CD8-positive, alpha-beta memory T cell (primary cell): ENCODE measurements at regions of chr15 and their contacts with region 1.

Region 1: GRCh38 chr15:51776952-51777574 is 25.7 kb downstream of the TMOD2 start:
- DNase-seq: peak; percentile 37 to 72 (median 47)
- H3K4me3 ChIP-seq: no peak overlapping the region
- H3K4me3 Mint-ChIP-seq: no peak overlapping the region
- H3K27ac ChIP-seq: no peak overlapping the region
- H3K27ac Mint-ChIP-seq: no peak overlapping the region
- H3K4me1 ChIP-seq: no peaks in the 10 kb centered on the region
- H3K4me1 Mint-ChIP-seq: peaks cover 5 to 11% (median 6%) of the 10 kb centered on the region in 3 donors
- H3K27me3 ChIP-seq: no peaks in the 10 kb centered on the region
- H3K27me3 Mint-ChIP-seq: no peaks in the 10 kb centered on the region

Region 2: GRCh38 chr15:51377071-51377786 is 399.8 kb before region 1 on chr15:
- CTCF ChIA-PET with region 1: no interaction called
- POLR2A ChIA-PET with region 1: no interaction called
- DNase-seq: no peak
- H3K4me3 ChIP-seq: no peak overlapping the region
- H3K4me3 Mint-ChIP-seq: no peak overlapping the region
- H3K27ac ChIP-seq: no peak overlapping the region
- H3K27ac Mint-ChIP-seq: no peak overlapping the region
- H3K4me1 ChIP-seq: no peaks in the 10 kb centered on the region
- H3K4me1 Mint-ChIP-seq: no peaks in the 10 kb centered on the region
- H3K27me3 ChIP-seq: no peaks in the 10 kb centered on the region
- H3K27me3 Mint-ChIP-seq: peaks cover 5 to 10% of the 10 kb centered on the region in 2 donors

Region 3: GRCh38 chr15:51622604-51623370 is 154.3 kb before region 1 on chr15 and contains the start of gene DMXL2:
- CTCF ChIA-PET with region 1: interaction called, 10 read pairs
- POLR2A ChIA-PET with region 1: no interaction called
- DNase-seq: peak; percentile 37 to 80 (median 52)
- H3K4me3 ChIP-seq: peak within 1 kb of the TSS; percentile 61
- H3K4me3 Mint-ChIP-seq: peak within 1 kb of the TSS; percentile 66 to 94 (median 80)
- H3K27ac ChIP-seq: peak within 1 kb of the TSS; percentile 41
- H3K27ac Mint-ChIP-seq: peak within 1 kb of the TSS in 4 of 8 donors; percentile 21 to 78 (median 42)
- H3K4me1 ChIP-seq: peaks cover 7% of the 10 kb centered on the region
- H3K4me1 Mint-ChIP-seq: peaks cover 10 to 25% (median 15%) of the 10 kb centered on the region in 3 donors
- H3K27me3 ChIP-seq: no peaks in the 10 kb centered on the region
- H3K27me3 Mint-ChIP-seq: peaks cover 17 to 31% of the 10 kb centered on the region in 2 donors
- total RNA-seq, gene DMXL2: 5.8 to 7.0 TPM

Region 4: GRCh38 chr15:51658670-51659069 is 118.4 kb before region 1 on chr15:
- CTCF ChIA-PET with region 1: interaction called, 32 read pairs
- POLR2A ChIA-PET with region 1: no interaction called
- DNase-seq: no peak
- H3K4me3 ChIP-seq: no peak overlapping the region
- H3K4me3 Mint-ChIP-seq: no peak overlapping the region
- H3K27ac ChIP-seq: no peak overlapping the region
- H3K27ac Mint-ChIP-seq: no peak overlapping the region
- H3K4me1 ChIP-seq: no peaks in the 10 kb centered on the region
- H3K4me1 Mint-ChIP-seq: no peaks in the 10 kb centered on the region
- H3K27me3 ChIP-seq: no peaks in the 10 kb centered on the region
- H3K27me3 Mint-ChIP-seq: peaks cover 3% of the 10 kb centered on the region in 2 donors

Region 5: DNA sequence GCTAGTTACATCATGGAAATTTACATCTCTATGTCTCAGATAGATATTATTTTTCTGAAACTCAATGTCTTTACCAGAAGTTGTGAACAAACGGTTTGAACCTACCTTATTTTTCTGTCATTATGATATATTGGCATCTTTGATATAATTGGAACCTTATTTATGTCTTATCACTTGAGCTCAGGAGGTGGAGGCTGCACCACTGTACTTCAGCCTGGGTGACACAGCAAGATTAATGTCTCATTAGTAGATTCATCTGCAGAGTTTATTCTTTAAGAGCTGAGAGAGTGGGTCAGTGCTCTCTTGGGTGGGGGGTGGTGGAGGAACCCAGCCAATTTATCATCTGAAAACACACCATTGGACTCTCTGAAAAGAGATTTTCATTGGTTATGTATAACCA is 74.4 kb before region 1 on chr15:
- CTCF ChIA-PET with region 1: interaction called, 11 read pairs
- POLR2A ChIA-PET with region 1: no interaction called
- DNase-seq: no peak
- H3K4me3 ChIP-seq: no peak overlapping the region
- H3K4me3 Mint-ChIP-seq: no peak overlapping the region
- H3K27ac ChIP-seq: no peak overlapping the region
- H3K27ac Mint-ChIP-seq: no peak overlapping the region
- H3K4me1 ChIP-seq: no peaks in the 10 kb centered on the region
- H3K4me1 Mint-ChIP-seq: no peaks in the 10 kb centered on the region
- H3K27me3 ChIP-seq: peaks cover 10% of the 10 kb centered on the region
- H3K27me3 Mint-ChIP-seq: peaks cover 11 to 33% of the 10 kb centered on the region in 2 donors

Region 6: GRCh38 chr15:51737280-51738017 is 39.6 kb before region 1 on chr15 and contains the start of gene LYSMD2:
- CTCF ChIA-PET with region 1: interaction called, 43 read pairs
- POLR2A ChIA-PET with region 1: interaction called, 5 read pairs
- DNase-seq: peak; percentile 56 to 79 (median 75)
- H3K4me3 ChIP-seq: peak within 1 kb of the TSS; percentile 78
- H3K4me3 Mint-ChIP-seq: peak within 1 kb of the TSS; percentile 89 to 97 (median 94)
- H3K27ac ChIP-seq: peak within 1 kb of the TSS; percentile 71
- H3K27ac Mint-ChIP-seq: peak within 1 kb of the TSS; percentile 95 to 99 (median 98)
- H3K4me1 ChIP-seq: peaks cover 50% of the 10 kb centered on the region
- H3K4me1 Mint-ChIP-seq: peaks cover 50 to 61% (median 58%) of the 10 kb centered on the region in 3 donors
- H3K27me3 ChIP-seq: no peaks in the 10 kb centered on the region
- H3K27me3 Mint-ChIP-seq: no peaks in the 10 kb centered on the region
- total RNA-seq, gene LYSMD2: 25.1 TPM

Region 7: DNA sequence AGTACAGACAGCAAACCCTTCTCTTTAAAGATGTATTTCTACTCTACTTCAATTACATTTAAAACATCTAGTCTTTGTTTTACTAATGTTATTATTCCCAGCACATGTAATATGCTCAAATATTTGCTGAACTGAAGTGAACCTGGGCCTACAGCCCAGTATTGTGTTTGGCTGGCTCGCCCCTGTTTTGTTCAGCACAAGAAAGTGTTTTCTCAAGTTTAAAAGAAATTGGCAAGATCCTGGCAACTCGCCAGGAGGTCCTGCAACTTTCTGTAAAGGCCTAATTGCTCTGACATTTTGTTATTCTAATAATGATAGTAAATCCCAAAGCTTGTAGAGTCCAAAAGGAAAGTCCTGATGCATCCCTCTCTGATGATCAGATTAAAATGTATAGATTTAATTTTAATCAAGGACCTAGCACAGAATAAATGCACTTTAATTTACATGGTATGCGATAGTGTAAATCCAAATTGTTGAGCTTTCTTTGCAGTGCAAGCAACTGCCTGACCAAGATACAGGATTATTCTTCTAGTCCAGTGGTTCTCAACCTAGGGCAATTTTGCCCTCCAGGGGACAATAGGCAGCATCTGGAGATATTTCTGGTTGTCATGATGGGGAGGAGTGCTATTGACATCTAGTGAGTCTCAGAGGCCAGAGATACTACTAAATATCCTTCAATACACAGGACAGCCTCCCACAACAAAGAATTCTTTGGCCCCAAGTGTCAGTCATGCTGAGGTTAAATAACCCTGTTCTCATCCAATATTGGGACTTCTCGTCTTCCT is 16.6 kb after region 1 on chr15:
- CTCF ChIA-PET with region 1: no interaction called
- POLR2A ChIA-PET with region 1: no interaction called
- DNase-seq: no peak
- H3K4me3 ChIP-seq: no peak overlapping the region
- H3K4me3 Mint-ChIP-seq: no peak overlapping the region
- H3K27ac ChIP-seq: no peak overlapping the region
- H3K27ac Mint-ChIP-seq: peak overlapping the region in 2 of 8 donors; percentile 60 to 77
- H3K4me1 ChIP-seq: no peaks in the 10 kb centered on the region
- H3K4me1 Mint-ChIP-seq: peaks cover 0 to 6% (median 0%) of the 10 kb centered on the region in 3 donors
- H3K27me3 ChIP-seq: no peaks in the 10 kb centered on the region
- H3K27me3 Mint-ChIP-seq: peaks cover 0 to 3% of the 10 kb centered on the region in 2 donors